Pancreas (tissue), 10 donors: ENCODE measurements at regions of chr7 and their contacts with region 1.

Region 1: GRCh38 chr7:1473864-1474512 is 14.7 kb upstream of the MICALL2 start:
- DNase-seq: peak; percentile 75 to 94 (median 86)
- ATAC-seq: peak; percentile 75 to 88 (median 86)
- H3K4me3 ChIP-seq: no peak overlapping the region
- H3K27ac ChIP-seq: no peak overlapping the region
- H3K4me1 ChIP-seq: no peaks in the 10 kb centered on the region
- H3K27me3 ChIP-seq: no peaks in the 10 kb centered on the region
- CTCF ChIP-seq: peak; percentile 82 to 93 (median 85)

Region 2: GRCh38 chr7:1439373-1440363 is 34.3 kb before region 1 on chr7:
- intact Hi-C with region 1: loop called in 1 of 3 experiments (anchors 5 kb)
- DNase-seq: peak in 2 of 6 donors; percentile 34 to 75
- ATAC-seq: peak in 3 of 4 donors; percentile 13 to 59 (median 25)
- H3K4me3 ChIP-seq: no peak overlapping the region
- H3K27ac ChIP-seq: no peak overlapping the region
- H3K4me1 ChIP-seq: no peaks in the 10 kb centered on the region
- H3K27me3 ChIP-seq: no peaks in the 10 kb centered on the region
- CTCF ChIP-seq: no peak